GM12878 (cell line): ENCODE measurements at regions of chr11 and their contacts with region 1.

Region 1: GRCh38 chr11:61384271-61385242 is 7.8 kb upstream of the TMEM216 start:
- DNase-seq: no peak
- ATAC-seq: peak; percentile 63
- H3K4me3 ChIP-seq: no peak overlapping the region
- H3K27ac ChIP-seq: no peak overlapping the region
- H3K4me1 ChIP-seq: no peaks in the 10 kb centered on the region
- H3K27me3 ChIP-seq: no peaks in the 10 kb centered on the region
- CTCF ChIP-seq: peak; percentile 24 to 55 (median 48); a peak in 5 of 6 replicates
- EP300 ChIP-seq: no peak
- POLR2A ChIP-seq: no peak
- RAD21 ChIP-seq: peak; percentile 60

Region 2: GRCh38 chr11:61254403-61255025 is 130.0 kb before region 1 on chr11:
- CTCF ChIA-PET with region 1: interaction called, 48 read pairs
- POLR2A ChIA-PET with region 1: no interaction called
- RAD21 ChIA-PET with region 1: interaction called, 24 read pairs
- SMC1A ChIA-PET with region 1: interaction called, 30 read pairs
- in situ Hi-C with region 1: no loop called
- intact Hi-C with region 1: loop called (anchors 1 kb)
- DNase-seq: peak; percentile 25
- ATAC-seq: peak; percentile 99
- H3K4me3 ChIP-seq: no peak overlapping the region
- H3K27ac ChIP-seq: no peak overlapping the region
- H3K4me1 ChIP-seq: no peaks in the 10 kb centered on the region
- H3K27me3 ChIP-seq: no peaks in the 10 kb centered on the region
- CTCF ChIP-seq: peak; percentile 93 to 99 (median 96)
- EP300 ChIP-seq: no peak
- POLR2A ChIP-seq: no peak
- RAD21 ChIP-seq: peak; percentile 84

Region 3: DNA sequence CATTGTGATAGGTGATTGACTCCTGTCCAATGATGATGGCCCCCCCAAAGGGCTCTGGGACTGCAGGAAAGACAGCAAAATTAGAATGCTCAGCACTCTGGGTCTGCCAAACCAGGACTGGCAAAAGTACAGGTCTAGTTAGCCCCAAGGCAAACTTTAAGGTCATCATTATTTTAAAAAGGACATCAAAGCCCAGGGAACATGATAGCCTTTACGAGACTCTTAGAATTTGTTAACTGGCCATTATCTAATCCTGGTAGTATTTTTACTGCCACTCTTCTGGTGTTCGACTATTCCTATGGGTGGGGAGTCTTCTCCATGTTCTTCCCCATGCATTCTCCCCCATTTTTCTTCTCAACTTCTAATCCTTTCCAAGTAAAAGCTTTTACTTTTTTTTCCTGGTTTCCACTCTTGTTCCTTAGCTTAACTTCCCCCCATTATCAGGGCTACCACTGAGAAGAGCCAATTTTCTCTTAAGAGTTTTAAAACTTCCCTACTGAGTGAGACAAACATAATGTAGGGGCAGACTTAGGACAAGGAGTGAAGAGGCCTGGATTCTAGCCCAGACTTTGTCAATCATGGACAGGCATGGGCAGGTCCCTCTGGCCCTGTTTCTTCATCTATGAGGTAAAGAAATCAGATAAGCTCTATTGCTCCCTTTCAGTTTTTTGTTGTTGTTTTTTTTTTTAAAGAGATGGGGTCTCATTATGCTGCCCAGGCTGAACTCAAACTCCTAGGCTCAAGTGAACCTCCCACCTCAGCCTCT is 58.7 kb before region 1 on chr11:
- CTCF ChIA-PET with region 1: interaction called, 25 read pairs
- POLR2A ChIA-PET with region 1: interaction called, 6 read pairs
- RAD21 ChIA-PET with region 1: interaction called, 9 read pairs
- SMC1A ChIA-PET with region 1: interaction called, 16 read pairs
- in situ Hi-C with region 1: no loop called
- intact Hi-C with region 1: no loop called
- DNase-seq: no peak
- ATAC-seq: no peak
- H3K4me3 ChIP-seq: no peak overlapping the region
- H3K27ac ChIP-seq: no peak overlapping the region
- H3K4me1 ChIP-seq: no peaks in the 10 kb centered on the region
- H3K27me3 ChIP-seq: no peaks in the 10 kb centered on the region
- CTCF ChIP-seq: no peak
- EP300 ChIP-seq: no peak
- POLR2A ChIP-seq: no peak
- RAD21 ChIP-seq: no peak

Region 4: DNA sequence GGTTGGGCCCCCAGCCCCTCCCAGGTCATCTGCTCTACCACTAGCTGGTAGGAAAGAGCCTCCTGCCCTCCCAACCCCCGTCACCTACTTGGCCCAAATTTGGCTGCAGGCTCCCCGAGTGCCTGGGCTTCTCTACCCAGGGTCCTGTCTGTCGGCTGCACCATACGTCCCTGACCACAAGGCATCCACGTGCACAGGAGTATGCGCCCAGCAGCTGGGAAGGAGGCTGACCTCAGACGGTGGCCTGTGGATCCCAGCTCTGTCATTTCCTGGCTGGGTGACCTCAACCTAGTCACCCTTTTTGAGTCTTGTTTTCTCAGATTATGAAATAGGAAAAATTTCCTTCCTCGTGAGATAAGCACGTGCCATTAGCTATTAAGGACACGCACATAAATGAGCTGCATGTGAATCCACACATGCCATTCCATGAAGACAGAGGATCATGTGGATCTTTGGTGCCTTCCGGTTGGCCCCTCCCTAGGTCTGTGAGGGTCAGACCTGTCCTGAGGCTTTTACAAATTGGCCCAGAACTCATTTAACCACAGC is 36.6 kb before region 1 on chr11:
- CTCF ChIA-PET with region 1: interaction called, 309 read pairs
- POLR2A ChIA-PET with region 1: no interaction called
- RAD21 ChIA-PET with region 1: interaction called, 17 read pairs
- SMC1A ChIA-PET with region 1: interaction called, 8 read pairs
- in situ Hi-C with region 1: no loop called
- intact Hi-C with region 1: no loop called
- DNase-seq: no peak
- ATAC-seq: no peak
- H3K4me3 ChIP-seq: no peak overlapping the region
- H3K27ac ChIP-seq: no peak overlapping the region
- H3K4me1 ChIP-seq: no peaks in the 10 kb centered on the region
- H3K27me3 ChIP-seq: no peaks in the 10 kb centered on the region
- CTCF ChIP-seq: no peak
- EP300 ChIP-seq: no peak
- POLR2A ChIP-seq: no peak
- RAD21 ChIP-seq: no peak

Region 5: GRCh38 chr11:61361686-61362541 is 22.6 kb before region 1 on chr11 and contains the starts of genes CYB561A3 and TMEM138:
- CTCF ChIA-PET with region 1: interaction called, 309 read pairs
- POLR2A ChIA-PET with region 1: interaction called, 7 read pairs
- RAD21 ChIA-PET with region 1: interaction called, 43 read pairs
- SMC1A ChIA-PET with region 1: interaction called, 122 read pairs
- in situ Hi-C with region 1: no loop called
- intact Hi-C with region 1: loop called (anchors 2 kb)
- DNase-seq: peak; percentile 85
- ATAC-seq: peak; percentile 88
- H3K4me3 ChIP-seq: peak within 1 kb of the TSS; percentile 99
- H3K27ac ChIP-seq: peak within 1 kb of the TSS; percentile 98
- H3K4me1 ChIP-seq: peaks cover 29% of the 10 kb centered on the region
- H3K27me3 ChIP-seq: no peaks in the 10 kb centered on the region
- CTCF ChIP-seq: no peak
- EP300 ChIP-seq: peak; percentile 16 to 39; a peak in 1 of 4 replicates
- POLR2A ChIP-seq: peak; percentile 94
- RAD21 ChIP-seq: no peak
- polyA plus RNA-seq, gene CYB561A3: 40.1 to 53.5 TPM
- polyA plus RNA-seq, gene TMEM138: 64.2 to 87.2 TPM

Region 6: GRCh38 chr11:61401558-61401957 is 17.0 kb after region 1 on chr11:
- CTCF ChIA-PET with region 1: interaction called, 50 read pairs
- POLR2A ChIA-PET with region 1: no interaction called
- RAD21 ChIA-PET with region 1: interaction called, 5 read pairs
- SMC1A ChIA-PET with region 1: interaction called, 8 read pairs
- in situ Hi-C with region 1: no loop called
- intact Hi-C with region 1: no loop called
- DNase-seq: no peak
- ATAC-seq: no peak
- H3K4me3 ChIP-seq: no peak overlapping the region
- H3K27ac ChIP-seq: no peak overlapping the region
- H3K4me1 ChIP-seq: no peaks in the 10 kb centered on the region
- H3K27me3 ChIP-seq: no peaks in the 10 kb centered on the region
- CTCF ChIP-seq: no peak
- EP300 ChIP-seq: no peak
- POLR2A ChIP-seq: no peak; the same call in 1 of the 2 replicates
- RAD21 ChIP-seq: no peak